ENCODE measurements at regions of chr5 and their contacts with region 1.

Region 1: DNA sequence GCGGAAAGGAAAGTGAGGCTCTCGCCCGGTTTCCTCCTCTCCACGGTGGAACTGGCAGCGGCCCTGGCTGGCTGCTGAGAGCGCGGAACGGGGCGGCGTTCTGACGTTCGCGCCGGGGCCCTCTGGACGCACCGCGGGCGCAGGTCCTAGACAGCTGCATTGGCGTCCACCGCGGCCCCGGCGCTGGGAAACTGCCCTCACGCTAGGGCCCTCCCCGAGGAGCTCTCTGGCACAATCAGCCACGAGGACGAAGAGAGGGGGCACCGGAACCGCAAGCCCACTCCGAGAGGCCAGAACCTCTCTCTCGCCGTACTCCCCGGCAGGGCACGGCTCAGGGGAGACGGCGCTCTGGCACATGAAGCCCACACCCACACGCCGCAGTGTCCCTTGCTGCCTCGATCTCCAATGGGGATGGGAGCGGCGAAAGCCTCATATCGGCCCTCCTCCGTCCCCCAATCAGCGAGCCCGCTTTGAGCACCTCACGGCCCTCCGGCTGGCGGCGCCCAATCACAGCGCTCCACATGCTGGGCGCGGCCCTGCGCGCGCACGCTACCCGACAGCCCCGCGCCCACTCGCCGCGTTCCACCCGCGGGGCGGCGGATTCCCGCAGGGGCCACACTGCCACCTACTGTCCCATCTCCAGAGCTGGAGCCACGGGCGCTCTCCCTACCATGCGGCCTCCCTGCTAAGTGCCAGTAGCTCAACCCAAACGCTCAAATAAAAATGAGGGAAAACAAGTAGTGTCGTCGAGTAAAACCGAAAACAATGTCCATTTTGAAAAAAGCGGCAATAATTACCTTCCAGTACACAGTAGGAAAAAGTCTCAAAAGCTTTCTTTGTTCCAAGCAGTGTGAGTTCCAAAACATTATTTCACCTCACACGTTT is 11.8 kb downstream of the MRPS27 start:
- DNase-seq: peak; percentile 98
- H3K4me3 ChIP-seq: peak overlapping the region; percentile 65 to 73
- H3K27ac ChIP-seq: peak overlapping the region; percentile 78 to 95
- H3K4me1 ChIP-seq: peaks cover 4 to 9% of the 10 kb centered on the region in 2 experiments; a peak in 3 of 4 replicates
- H3K27me3 ChIP-seq: no peaks in the 10 kb centered on the region
- CTCF ChIP-seq: peak; percentile 90
- EP300 ChIP-seq: peak in 1 of 2 experiments; percentile 27; a peak in 2 of 4 replicates
- RAD21 ChIP-seq: peak; percentile 84

Region 2: DNA sequence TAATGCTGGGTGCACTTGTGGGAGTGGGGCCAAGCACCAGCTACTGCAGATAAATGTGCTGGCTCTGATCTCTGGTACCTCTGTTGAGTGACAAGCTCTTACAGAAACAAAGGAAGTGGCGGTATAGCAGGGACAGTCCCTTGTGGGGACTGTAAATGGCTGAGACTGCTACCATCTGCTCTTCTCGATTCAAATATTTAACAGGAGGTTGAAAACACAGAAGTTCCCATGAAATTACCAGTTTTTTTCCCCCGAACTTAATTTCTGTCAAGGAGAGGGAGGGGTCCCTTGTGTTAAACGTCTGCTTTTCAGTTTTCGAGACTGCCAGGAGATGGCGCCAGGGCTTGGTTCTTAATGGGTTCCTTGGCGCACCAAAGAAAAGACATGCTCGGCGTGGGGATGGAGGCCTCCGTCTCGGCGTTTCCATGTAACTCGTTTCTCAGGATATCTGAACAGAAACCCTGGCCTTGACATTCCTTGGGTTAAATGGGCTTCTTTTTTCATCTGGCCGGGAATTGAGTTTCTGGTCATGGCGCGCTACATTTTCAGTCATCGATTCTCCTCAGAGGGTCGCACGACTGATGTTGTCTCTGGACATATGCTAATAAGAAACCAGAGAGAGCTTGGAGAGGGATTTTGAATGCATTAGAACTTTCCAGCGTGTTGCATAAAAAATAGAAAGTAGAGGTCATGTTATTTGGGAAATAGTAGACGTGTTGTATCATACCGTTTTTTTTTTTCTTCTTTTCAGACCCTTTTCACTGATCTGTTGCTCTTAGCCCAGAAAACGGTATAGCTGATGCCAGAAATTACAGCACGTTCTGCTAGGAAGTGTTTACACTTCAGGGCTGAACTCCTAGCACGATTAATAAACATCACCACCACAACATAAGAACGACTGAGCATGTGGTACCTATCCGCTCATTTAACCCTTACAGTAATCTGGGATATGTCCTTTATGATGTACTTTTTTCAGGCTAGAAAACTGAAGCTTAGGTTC is 525.1 kb before region 1 on chr5:
- CTCF ChIA-PET with region 1: interaction called, 44 read pairs
- POLR2A ChIA-PET with region 1: no interaction called
- DNase-seq: peak; percentile 68
- H3K4me3 ChIP-seq: peak overlapping the region in 1 of 2 experiments; percentile 40; a peak in 1 of 4 replicates
- H3K27ac ChIP-seq: 0 out of 4 replicates have a peak overlapping the region, but pooled peaks of 1 of the 2 experiments have one; percentile 6
- H3K4me1 ChIP-seq: peaks cover 4 to 13% of the 10 kb centered on the region in 2 experiments; a peak in 2 of 4 replicates
- H3K27me3 ChIP-seq: no peaks in the 10 kb centered on the region
- CTCF ChIP-seq: peak; percentile 83
- EP300 ChIP-seq: no peak
- RAD21 ChIP-seq: peak; percentile 85

Region 3: DNA sequence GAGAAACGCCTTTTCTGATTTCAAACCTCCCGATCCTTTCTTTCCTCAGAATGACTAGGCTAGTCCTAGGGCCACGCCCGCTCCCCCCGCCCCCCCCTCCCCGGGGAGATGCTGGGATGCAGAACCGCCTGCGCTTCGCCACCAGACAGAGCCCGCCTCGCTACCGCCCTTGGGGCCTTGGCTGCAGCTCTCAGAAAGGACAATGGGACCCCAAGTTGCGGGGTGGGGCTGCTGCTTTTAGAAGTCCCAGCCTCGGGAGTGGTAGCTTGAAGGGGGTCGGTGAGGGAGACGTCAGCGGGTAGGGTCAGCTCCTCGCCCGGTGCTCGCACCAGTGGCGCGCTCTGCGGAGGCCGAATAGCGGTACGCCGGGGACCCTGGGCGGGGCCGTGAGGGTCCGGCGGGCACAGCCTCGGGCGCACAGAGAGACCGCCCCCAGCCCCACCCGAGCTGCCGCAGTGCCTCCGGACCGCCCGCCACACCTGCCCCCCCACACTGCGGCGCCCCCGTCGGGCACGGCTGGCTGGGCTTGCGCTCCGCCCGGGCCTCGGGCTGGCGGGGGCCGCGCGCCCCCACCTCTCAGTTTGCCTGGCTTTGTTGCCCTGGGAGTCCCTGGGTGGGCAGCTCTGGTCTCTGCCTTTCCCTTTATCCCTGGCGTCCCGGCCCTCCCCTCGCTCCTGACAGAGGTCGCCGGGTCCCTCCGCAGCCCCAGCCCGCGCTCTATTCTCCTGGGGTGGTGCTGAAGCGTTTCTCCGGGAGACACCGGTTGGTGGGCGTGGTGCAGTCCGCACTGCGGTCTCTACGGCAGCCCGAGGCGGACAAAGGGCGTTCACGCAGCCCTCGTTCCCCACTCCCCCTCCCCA is 199.8 kb before region 1 on chr5:
- CTCF ChIA-PET with region 1: interaction called, 9 read pairs
- POLR2A ChIA-PET with region 1: interaction called, 21 read pairs
- DNase-seq: peak; percentile 82
- H3K4me3 ChIP-seq: peak overlapping the region; percentile 83 to 97
- H3K27ac ChIP-seq: peak overlapping the region; percentile 78 to 97
- H3K4me1 ChIP-seq: peaks cover 16 to 38% of the 10 kb centered on the region in 2 experiments
- H3K27me3 ChIP-seq: no peaks in the 10 kb centered on the region
- CTCF ChIP-seq: no peak
- EP300 ChIP-seq: no peak
- RAD21 ChIP-seq: no peak

Region 4: DNA sequence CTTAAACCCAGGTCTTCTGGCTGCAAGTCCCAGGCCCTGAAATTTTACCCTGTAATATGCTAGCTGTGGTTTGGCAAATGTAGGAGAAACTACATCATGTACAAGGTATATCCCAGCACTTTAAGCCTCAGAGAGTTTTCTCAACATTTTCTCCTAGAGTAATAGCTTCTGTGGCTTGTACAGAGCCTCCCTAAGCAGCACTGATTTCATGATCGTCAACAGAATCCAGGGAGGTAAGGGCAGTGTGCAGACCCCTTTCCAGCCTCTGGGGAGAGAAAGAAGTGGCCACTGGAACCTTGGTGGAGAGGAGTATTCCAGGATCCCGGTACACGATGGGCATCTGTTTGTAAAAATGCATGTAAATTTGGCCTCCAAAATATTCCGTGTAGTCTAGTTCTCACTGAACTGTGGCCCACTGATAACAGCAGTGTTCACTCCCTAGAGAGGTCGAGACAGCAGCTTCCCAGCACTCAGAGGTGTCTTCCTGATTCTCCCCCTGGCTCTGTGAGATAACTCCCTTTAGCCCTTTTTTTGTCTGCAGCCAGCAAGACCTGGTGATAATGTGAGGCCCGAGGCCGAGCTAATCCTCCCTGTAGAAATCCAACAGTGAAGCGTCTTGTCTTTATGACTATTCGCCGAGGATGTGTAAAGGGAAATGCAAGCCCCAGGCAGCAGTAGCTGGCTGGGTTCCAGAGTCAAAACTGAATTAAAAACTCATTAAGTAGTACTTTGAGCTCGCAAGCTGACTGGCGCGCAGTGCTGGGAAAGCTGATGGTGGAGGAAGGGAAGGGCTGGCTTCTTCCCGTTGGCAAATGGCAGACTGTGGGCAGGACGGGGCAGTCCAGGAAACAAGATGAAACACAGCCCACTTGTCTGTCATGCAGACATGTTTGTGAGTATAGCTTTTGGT is 141.9 kb before region 1 on chr5:
- CTCF ChIA-PET with region 1: interaction called, 3 read pairs
- POLR2A ChIA-PET with region 1: interaction called, 11 read pairs
- DNase-seq: peak; percentile 78
- H3K4me3 ChIP-seq: peak overlapping the region in 1 of 2 experiments; percentile 13; a peak in 1 of 4 replicates
- H3K27ac ChIP-seq: peak overlapping the region; percentile 83 to 100
- H3K4me1 ChIP-seq: peaks cover 52 to 55% of the 10 kb centered on the region in 2 experiments
- H3K27me3 ChIP-seq: no peaks in the 10 kb centered on the region
- CTCF ChIP-seq: no peak
- EP300 ChIP-seq: peak in 1 of 2 experiments; percentile 89; a peak in 2 of 4 replicates
- RAD21 ChIP-seq: peak; percentile 19

Region 5: GRCh38 chr5:72280581-72281170 is 27.5 kb before region 1 on chr5:
- CTCF ChIA-PET with region 1: interaction called, 10 read pairs
- POLR2A ChIA-PET with region 1: interaction called, 15 read pairs
- DNase-seq: peak; percentile 37
- H3K4me3 ChIP-seq: no peak overlapping the region; a peak in 1 of 4 replicates
- H3K27ac ChIP-seq: peak overlapping the region; percentile 88 to 90
- H3K4me1 ChIP-seq: peaks cover 33% of the 10 kb centered on the region in 2 experiments
- H3K27me3 ChIP-seq: no peaks in the 10 kb centered on the region
- CTCF ChIP-seq: peak; percentile 75
- EP300 ChIP-seq: peak in 1 of 2 experiments; percentile 81; a peak in 2 of 4 replicates
- RAD21 ChIP-seq: peak; percentile 54

Region 6: GRCh38 chr5:72296256-72296655 is 12.0 kb before region 1 on chr5:
- CTCF ChIA-PET with region 1: interaction called, 12 read pairs
- POLR2A ChIA-PET with region 1: no interaction called
- DNase-seq: no peak
- H3K4me3 ChIP-seq: no peak overlapping the region
- H3K27ac ChIP-seq: no peak overlapping the region
- H3K4me1 ChIP-seq: peaks cover 0 to 3% of the 10 kb centered on the region in 2 experiments; a peak in 3 of 4 replicates
- H3K27me3 ChIP-seq: no peaks in the 10 kb centered on the region
- CTCF ChIP-seq: no peak
- EP300 ChIP-seq: no peak
- RAD21 ChIP-seq: no peak

Region 7: DNA sequence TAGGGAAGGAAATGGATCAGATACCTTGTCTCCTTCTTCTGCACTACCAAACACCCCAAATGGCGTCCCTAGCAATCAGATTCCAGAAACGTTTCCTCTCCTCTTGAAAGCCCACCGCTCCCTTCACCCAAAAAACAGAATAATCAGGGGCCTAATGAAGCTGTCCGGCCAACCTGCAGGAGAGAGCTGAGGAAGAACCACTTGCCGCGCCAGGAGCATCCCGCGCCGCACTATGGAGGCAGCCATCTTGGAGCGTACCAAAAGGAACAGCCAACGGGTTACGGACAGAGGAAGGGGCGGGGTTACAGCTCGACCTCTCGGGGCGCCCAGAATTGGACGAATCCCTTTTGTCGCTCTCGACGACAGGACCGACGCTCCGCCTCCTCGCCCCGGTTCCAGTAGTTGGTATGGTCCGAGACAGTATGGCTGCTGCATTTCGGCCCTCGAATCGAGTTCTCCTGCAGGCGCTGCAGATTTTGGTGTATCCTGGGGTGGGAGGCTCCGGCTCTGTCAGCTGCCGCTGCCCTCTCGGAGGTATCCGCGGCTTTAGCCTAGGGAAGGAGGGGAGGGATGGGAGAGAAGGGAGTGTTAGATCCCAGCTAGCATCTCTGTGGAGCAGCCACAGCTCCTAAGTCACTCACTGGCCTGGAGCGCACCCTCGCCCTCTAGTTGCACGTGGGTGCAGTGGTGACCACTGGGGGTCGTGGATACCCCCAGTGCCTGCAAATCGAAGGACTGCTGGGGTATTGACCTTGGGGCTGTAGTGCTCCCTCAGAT is 12.0 kb after region 1 on chr5 and contains the starts of genes MRPS27 and PTCD2:
- CTCF ChIA-PET with region 1: interaction called, 33 read pairs
- POLR2A ChIA-PET with region 1: interaction called, 16 read pairs
- DNase-seq: peak; percentile 97
- H3K4me3 ChIP-seq: peak within 1 kb of the TSS; percentile 77 to 84
- H3K27ac ChIP-seq: peak within 1 kb of the TSS; percentile 66 to 90
- H3K4me1 ChIP-seq: peaks cover 0 to 4% of the 10 kb centered on the region in 2 experiments; a peak in 3 of 4 replicates
- H3K27me3 ChIP-seq: no peaks in the 10 kb centered on the region
- CTCF ChIP-seq: peak; percentile 46
- EP300 ChIP-seq: no peak
- RAD21 ChIP-seq: no peak
- polyA plus RNA-seq, gene MRPS27: 37.5 and 48.2 TPM in 2 replicates
- polyA plus RNA-seq, gene PTCD2: 6.7 and 8.6 TPM in 2 replicates

Measured in SK-N-SH (cell line).